Breast epithelium (tissue), 4 donors: ENCODE measurements at regions of chr15 and their contacts with region 1.

Region 1: DNA sequence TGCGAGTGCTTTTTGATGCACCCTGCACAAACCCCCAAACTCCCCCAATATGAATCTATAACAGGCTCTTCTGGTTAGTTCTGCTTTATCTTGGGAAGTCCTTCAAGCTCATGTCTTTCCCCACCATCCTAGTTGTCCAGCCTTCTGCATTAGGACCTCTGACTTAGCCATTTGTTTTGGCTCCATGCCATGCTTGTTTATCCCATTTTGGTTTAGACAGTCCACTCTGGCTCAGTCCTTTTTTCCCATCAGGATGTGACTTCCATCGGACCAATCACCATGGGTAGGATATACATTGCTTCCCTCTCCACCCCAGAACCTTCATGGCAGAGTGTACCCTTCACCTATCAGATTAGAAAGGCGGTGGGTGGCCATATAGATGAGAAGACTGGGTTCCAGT is 346.4 kb upstream of the NR2E3 start:
- DNase-seq: no peak
- H3K4me3 ChIP-seq: no peak overlapping the region
- H3K27ac ChIP-seq: no peak overlapping the region
- H3K4me1 ChIP-seq: no peaks in the 10 kb centered on the region
- H3K27me3 ChIP-seq: no peaks in the 10 kb centered on the region
- CTCF ChIP-seq: no peak
- POLR2A ChIP-seq: no peak

Region 2: GRCh38 chr15:71494563-71495397 is 30.8 kb after region 1 on chr15:
- intact Hi-C with region 1: loop called (anchors 1 kb)
- DNase-seq: no peak
- H3K4me3 ChIP-seq: no peak overlapping the region
- H3K27ac ChIP-seq: no peak overlapping the region
- H3K4me1 ChIP-seq: no peaks in the 10 kb centered on the region
- H3K27me3 ChIP-seq: no peaks in the 10 kb centered on the region
- CTCF ChIP-seq: no peak
- POLR2A ChIP-seq: no peak